ENCODE measurements at regions of chr10 and their contacts with region 1.

Region 1: DNA sequence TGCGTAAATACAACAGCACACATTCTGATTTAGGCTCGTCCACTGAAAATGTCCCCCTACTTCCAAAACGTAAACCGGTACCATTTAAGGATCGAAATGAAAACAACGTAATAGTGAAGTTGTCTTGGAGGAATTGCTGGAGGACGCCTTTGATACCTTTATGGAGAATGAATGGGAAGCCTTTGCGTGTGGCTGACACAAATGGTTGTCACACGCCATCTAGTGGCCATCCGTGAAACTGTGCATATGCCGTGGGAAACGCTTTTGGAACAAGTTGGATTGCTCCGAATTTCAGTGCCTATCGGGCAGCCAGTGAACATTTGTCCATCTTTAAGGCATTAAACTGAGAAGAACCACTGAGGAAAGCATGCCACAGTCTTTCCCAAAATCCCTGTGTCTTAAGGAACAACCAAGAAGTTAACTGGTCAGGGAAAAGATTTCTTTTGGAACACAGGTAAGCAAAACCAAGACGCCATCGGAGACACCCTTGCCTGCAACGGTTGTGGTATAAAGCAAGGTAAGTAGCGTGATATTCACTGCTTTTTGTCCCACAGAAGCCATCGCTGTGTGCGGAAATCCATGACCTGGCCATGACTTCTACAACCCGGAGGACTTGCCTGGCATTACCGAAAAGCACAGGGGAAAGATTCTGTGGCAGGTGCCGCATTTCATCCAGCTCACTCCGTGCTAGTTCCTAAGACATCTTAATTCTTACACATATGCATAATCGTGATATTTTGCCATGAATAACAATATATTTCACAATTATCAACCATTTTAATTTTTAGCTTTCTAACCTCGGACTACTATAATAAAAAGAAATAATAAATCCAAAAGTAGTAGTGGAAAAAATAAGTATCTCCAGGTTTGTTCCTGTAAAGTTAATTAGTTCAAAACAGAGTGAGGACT is 100.6 kb downstream of the FAM204A start:
- DNase-seq: peak; percentile 71 to 78 (median 71)
- H3K4me3 ChIP-seq: no peak overlapping the region
- H3K27ac ChIP-seq: no peak overlapping the region
- H3K4me1 ChIP-seq: no peaks in the 10 kb centered on the region
- H3K27me3 ChIP-seq: peaks cover 20 to 92% (median 33%) of the 10 kb centered on the region in 5 experiments

Region 2: DNA sequence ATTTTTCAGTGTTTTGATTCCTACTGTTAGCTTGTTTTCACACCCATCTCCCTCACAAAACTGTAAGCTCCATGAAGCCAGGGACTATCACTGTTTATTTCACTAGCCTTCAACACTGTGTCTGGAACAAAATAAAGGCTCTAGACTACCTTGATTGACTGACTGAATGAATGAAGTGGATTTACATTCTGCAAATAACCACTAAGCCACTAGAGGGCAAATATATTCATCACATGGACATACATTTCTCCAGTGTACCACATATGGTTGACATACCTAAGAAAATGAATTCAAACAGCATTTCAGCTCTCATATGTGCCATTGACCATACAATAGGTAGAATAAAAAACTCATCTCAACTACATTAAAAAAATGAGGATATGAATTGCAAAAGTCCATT is 380.7 kb before region 1 on chr10:
- CTCF ChIA-PET with region 1: interaction called, 22 read pairs
- POLR2A ChIA-PET with region 1: no interaction called
- DNase-seq: peak; percentile 6 to 31 (median 28)
- H3K4me3 ChIP-seq: no peak overlapping the region
- H3K27ac ChIP-seq: no peak overlapping the region
- H3K4me1 ChIP-seq: no peaks in the 10 kb centered on the region
- H3K27me3 ChIP-seq: peaks cover 0 to 12% (median 2%) of the 10 kb centered on the region in 5 experiments

Region 3: GRCh38 chr10:117948493-117948892 is 293.0 kb before region 1 on chr10:
- CTCF ChIA-PET with region 1: no interaction called
- POLR2A ChIA-PET with region 1: no interaction called
- DNase-seq: no peak
- H3K4me3 ChIP-seq: no peak overlapping the region
- H3K27ac ChIP-seq: no peak overlapping the region
- H3K4me1 ChIP-seq: no peaks in the 10 kb centered on the region
- H3K27me3 ChIP-seq: peaks cover 2 to 8% (median 6%) of the 10 kb centered on the region in 5 experiments

Measured in common myeloid progenitor, CD34-positive (primary cell).